ENCODE measurements at regions of chr19 and their contacts with region 1.

Region 1: GRCh38 chr19:36169084-36169760 is 17.0 kb upstream of the COX7A1 start:
- DNase-seq: no peak
- H3K4me3 ChIP-seq: no peak overlapping the region
- H3K4me3 Mint-ChIP-seq: no peak overlapping the region
- H3K27ac ChIP-seq: no peak overlapping the region
- H3K27ac Mint-ChIP-seq: peak overlapping the region in 3 of 7 donors; percentile 5 to 80 (median 70)
- H3K4me1 ChIP-seq: peaks cover 3% of the 10 kb centered on the region
- H3K4me1 Mint-ChIP-seq: peaks cover 3 to 5% (median 4%) of the 10 kb centered on the region in 4 donors
- H3K27me3 ChIP-seq: no peaks in the 10 kb centered on the region
- H3K27me3 Mint-ChIP-seq: no peaks in the 10 kb centered on the region

Region 2: DNA sequence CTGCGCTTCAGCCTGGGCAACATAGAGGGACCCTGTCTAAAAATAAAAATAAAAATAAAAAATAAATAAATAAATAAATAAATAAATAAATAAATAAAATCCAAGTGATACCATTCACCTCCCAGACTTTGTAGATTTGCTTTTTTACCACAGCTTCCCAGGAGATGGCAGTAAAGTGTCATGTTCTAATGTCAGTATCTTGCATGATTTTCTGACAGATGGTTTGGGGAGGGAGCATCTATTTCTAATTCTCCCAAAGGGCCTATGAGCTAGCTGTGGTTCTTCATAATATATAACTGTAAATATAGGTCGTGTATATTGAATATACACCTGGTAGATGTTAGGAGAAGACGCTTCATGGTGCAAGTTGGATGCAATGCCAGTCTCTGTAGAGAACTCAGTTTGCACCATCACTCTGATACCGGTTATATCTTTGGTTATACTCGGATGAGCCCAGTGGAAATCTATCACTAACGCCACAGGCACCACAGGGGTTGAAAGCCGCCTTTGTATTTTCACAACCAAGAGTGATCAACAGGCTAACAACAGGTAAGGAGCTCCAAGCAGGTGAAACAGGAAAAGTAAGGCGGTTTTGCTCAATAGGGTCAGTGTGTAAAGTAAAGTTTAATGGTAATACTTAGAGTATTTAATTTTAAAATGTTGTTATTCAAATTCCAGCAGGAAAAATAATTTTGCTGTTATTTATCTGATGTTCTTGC is 286.9 kb before region 1 on chr19:
- CTCF ChIA-PET with region 1: interaction called, 3 read pairs
- POLR2A ChIA-PET with region 1: no interaction called
- intact Hi-C with region 1: loop called (anchors 5 kb)
- DNase-seq: peak; percentile 71 to 75 (median 72)
- H3K4me3 ChIP-seq: no peak overlapping the region
- H3K4me3 Mint-ChIP-seq: no peak overlapping the region
- H3K27ac ChIP-seq: no peak overlapping the region
- H3K27ac Mint-ChIP-seq: peak overlapping the region in 2 of 7 donors; percentile 57 to 72
- H3K4me1 ChIP-seq: peaks cover 13% of the 10 kb centered on the region
- H3K4me1 Mint-ChIP-seq: peaks cover 8 to 19% (median 9%) of the 10 kb centered on the region in 4 donors
- H3K27me3 ChIP-seq: peaks cover 14% of the 10 kb centered on the region
- H3K27me3 Mint-ChIP-seq: peaks cover 7 to 15% of the 10 kb centered on the region in 2 donors

Region 3: DNA sequence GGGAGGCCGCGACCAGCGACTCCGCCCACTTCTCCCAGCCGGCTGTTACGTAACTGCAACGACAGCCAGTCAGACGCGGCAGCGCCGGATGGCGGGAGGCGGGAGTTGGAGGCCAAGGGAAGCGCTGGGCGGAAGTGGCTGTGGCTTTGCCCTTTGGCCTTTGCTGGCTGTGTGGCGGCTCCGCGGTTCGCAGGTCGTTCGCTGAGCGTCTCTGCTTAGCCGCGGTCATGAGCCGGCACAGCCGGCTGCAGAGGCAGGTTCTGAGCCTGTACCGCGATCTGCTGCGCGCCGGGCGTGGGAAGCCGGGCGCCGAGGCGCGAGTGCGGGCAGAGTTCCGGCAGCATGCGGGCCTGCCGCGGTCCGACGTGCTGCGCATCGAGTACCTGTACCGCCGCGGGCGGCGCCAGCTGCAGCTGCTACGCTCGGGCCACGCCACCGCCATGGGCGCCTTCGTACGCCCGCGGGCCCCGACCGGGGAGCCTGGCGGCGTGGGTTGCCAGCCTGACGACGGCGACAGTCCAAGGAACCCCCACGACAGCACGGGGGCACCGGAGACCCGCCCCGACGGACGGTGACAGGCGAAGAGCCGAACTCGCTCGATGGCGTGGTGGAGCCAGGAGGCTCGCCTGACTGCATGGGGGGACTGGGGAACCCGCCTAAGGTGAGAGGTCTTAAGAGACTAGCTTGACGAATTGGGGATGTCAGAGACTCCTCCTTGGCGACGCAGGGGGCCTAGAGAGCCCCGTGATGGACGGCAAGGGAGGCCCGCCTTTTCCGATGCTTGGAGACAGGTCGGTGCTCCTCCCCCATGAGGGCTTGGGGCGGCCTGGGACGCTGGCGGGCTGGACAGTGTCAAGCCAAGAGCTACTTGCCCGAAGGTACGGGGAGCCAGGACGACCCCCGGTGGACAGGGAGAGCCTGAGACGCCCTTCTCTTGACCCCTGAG is 173.9 kb before region 1 on chr19 and contains the start of gene SDHAF1:
- CTCF ChIA-PET with region 1: no interaction called
- POLR2A ChIA-PET with region 1: no interaction called
- intact Hi-C with region 1: loop called (anchors 1 kb)
- DNase-seq: peak; percentile 87 to 92 (median 87)
- H3K4me3 ChIP-seq: peak within 1 kb of the TSS; percentile 69 to 82
- H3K4me3 Mint-ChIP-seq: peak within 1 kb of the TSS; percentile 91 to 96 (median 94)
- H3K27ac ChIP-seq: peak within 1 kb of the TSS; percentile 71
- H3K27ac Mint-ChIP-seq: peak within 1 kb of the TSS; percentile 92 to 97 (median 97)
- H3K4me1 ChIP-seq: peaks cover 26% of the 10 kb centered on the region
- H3K4me1 Mint-ChIP-seq: peaks cover 20 to 48% (median 37%) of the 10 kb centered on the region in 4 donors
- H3K27me3 ChIP-seq: no peaks in the 10 kb centered on the region
- H3K27me3 Mint-ChIP-seq: no peaks in the 10 kb centered on the region
- total RNA-seq, gene SDHAF1: 25.7 to 25.8 TPM

Region 4: GRCh38 chr19:36060430-36060829 is 108.8 kb before region 1 on chr19:
- CTCF ChIA-PET with region 1: interaction called, 7 read pairs
- POLR2A ChIA-PET with region 1: no interaction called
- intact Hi-C with region 1: loop called (anchors 2 kb)
- DNase-seq: peak in 1 of 5 donors; percentile 7
- H3K4me3 ChIP-seq: no peak overlapping the region
- H3K4me3 Mint-ChIP-seq: no peak overlapping the region
- H3K27ac ChIP-seq: no peak overlapping the region
- H3K27ac Mint-ChIP-seq: peak overlapping the region in 2 of 7 donors; percentile 68 to 82
- H3K4me1 ChIP-seq: peaks cover 3% of the 10 kb centered on the region
- H3K4me1 Mint-ChIP-seq: peaks cover 2 to 8% (median 3%) of the 10 kb centered on the region in 4 donors
- H3K27me3 ChIP-seq: no peaks in the 10 kb centered on the region
- H3K27me3 Mint-ChIP-seq: no peaks in the 10 kb centered on the region

Region 5: DNA sequence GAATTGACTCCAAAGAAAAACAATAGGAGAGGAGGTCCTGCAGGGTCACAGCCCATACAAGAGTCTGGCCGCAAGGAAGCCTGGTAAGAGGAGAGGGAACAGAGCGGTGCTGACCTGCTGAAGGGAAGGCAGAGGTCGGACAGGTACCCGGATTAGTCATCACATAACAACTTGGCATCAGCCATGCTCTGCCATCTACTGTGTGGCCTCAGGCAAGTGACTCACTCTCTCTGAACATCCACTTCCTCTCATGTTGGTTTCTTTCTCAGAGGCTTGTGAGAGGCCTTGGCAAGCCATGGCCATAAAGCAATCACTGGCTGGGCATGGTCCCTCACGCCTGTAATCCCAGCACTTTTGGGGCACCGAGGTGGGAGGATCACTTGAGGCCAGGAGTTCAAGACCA is 36.7 kb before region 1 on chr19:
- CTCF ChIA-PET with region 1: interaction called, 215 read pairs
- POLR2A ChIA-PET with region 1: interaction called, 18 read pairs
- intact Hi-C with region 1: no loop called
- DNase-seq: peak in 2 of 5 donors; percentile 14 to 54
- H3K4me3 ChIP-seq: no peak overlapping the region
- H3K4me3 Mint-ChIP-seq: peak overlapping the region in 4 of 8 donors; percentile 40 to 59 (median 54)
- H3K27ac ChIP-seq: no peak overlapping the region
- H3K27ac Mint-ChIP-seq: peak overlapping the region; percentile 29 to 86 (median 78)
- H3K4me1 ChIP-seq: peaks cover 32% of the 10 kb centered on the region
- H3K4me1 Mint-ChIP-seq: peaks cover 15 to 50% (median 29%) of the 10 kb centered on the region in 4 donors
- H3K27me3 ChIP-seq: no peaks in the 10 kb centered on the region
- H3K27me3 Mint-ChIP-seq: no peaks in the 10 kb centered on the region

Region 6: DNA sequence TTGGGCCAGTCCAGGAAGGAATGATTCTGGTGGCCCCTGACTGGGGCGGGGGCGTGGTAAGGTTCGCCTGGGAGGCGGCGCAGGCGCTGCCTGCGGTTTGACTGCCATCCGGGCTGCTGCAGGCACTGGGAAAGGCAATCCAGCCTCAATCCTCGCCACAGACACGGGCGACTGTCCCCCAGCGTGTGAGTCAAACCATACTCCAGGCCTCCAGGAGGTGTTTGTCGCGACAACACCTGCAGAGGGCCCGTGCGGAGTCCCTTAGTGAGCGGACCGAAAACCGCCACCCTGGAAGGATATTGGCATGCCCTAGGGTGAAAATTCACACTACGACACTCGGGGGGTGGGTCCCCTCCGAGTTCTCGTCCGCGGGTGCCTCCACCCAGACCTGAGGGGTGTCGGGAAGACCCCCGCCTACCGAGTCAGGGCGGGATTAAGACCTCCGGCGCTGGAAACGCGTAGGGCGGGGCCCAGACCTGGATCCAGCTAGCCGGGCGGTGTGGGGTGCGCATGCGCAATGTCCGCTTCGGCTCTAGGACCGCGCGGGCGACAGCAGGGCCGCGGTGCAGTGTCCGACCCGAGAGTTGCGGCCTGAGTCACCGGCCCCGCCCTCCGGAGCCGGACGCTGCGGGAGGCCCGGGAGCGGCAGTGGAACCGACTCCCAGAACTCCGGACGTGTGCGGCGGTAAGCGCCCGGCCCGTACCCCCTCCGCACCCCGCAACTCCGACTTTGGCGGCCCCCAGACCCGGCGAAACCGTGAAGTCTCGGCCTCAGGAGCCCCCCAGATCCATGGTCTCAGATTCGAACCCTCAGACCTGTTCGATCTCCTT is 29.5 kb before region 1 on chr19 and contains the start of gene CAPNS1:
- CTCF ChIA-PET with region 1: interaction called, 5 read pairs
- POLR2A ChIA-PET with region 1: interaction called, 11 read pairs
- intact Hi-C with region 1: loop called (anchors 1 kb)
- DNase-seq: peak; percentile 87 to 90 (median 88)
- H3K4me3 ChIP-seq: peak within 1 kb of the TSS; percentile 74 to 84
- H3K4me3 Mint-ChIP-seq: peak within 1 kb of the TSS; percentile 92 to 97 (median 96)
- H3K27ac ChIP-seq: peak within 1 kb of the TSS; percentile 88
- H3K27ac Mint-ChIP-seq: peak within 1 kb of the TSS; percentile 70 to 97 (median 95)
- H3K4me1 ChIP-seq: peaks cover 15% of the 10 kb centered on the region
- H3K4me1 Mint-ChIP-seq: peaks cover 12 to 31% (median 23%) of the 10 kb centered on the region in 4 donors
- H3K27me3 ChIP-seq: no peaks in the 10 kb centered on the region
- H3K27me3 Mint-ChIP-seq: no peaks in the 10 kb centered on the region
- total RNA-seq, gene CAPNS1: 255 to 259 TPM